ENCODE measurements at regions of chr17 and their contacts with region 1.

Region 1: GRCh38 chr17:8222630-8223356 is 12.4 kb upstream of the AURKB start:
- DNase-seq: peak; percentile 95
- ATAC-seq: peak; percentile 66 to 74

Region 2: GRCh38 chr17:8118769-8119580 is 103.8 kb before region 1 on chr17:
- intact Hi-C with region 1: loop called (anchors 1 to 5 kb)
- DNase-seq: peak; percentile 91
- ATAC-seq: peak; percentile 80 to 81

Region 3: GRCh38 chr17:8186787-8187516 is 35.8 kb before region 1 on chr17:
- intact Hi-C with region 1: loop called (anchors 1 to 2 kb)
- DNase-seq: peak; percentile 91
- ATAC-seq: peak; percentile 69 to 72

Region 4: GRCh38 chr17:8275421-8276290 is 52.9 kb after region 1 on chr17:
- intact Hi-C with region 1: no loop called
- DNase-seq: no peak
- ATAC-seq: no peak

Region 5: GRCh38 chr17:8294814-8295316 is 72.1 kb after region 1 on chr17:
- intact Hi-C with region 1: loop called in 1 of 2 experiments (anchors 2 kb)
- DNase-seq: no peak
- ATAC-seq: peak; percentile 2 to 22

Measured in left cardiac atrium (tissue), 4 donors.